Adrenal gland (tissue), 19 donors: ENCODE measurements at regions of chr15 and their contacts with region 1.

Region 1: DNA sequence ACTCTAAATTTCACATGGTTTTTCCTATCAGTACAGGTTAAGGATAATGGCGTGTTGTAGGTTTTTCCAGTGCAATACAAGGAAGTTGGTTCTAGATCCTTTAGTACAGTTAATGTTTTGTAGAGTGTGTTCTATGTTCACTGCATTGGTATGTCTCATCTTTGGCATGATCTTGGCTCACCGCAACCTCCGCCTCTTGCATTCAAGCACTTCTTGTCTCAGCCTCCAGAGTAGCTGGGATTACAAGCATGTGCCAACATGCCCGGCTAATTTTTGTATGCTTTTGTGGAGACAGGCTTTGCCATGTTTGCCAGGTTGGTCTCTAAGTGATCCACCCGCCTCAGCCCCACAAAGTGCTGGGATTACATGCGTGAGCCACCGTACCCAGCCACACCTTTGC is 30.4 kb downstream of the SNRPN start:
- DNase-seq: no peak
- H3K4me3 ChIP-seq: no peak overlapping the region
- H3K27ac ChIP-seq: no peak overlapping the region
- H3K4me1 ChIP-seq: no peaks in the 10 kb centered on the region
- H3K27me3 ChIP-seq: no peaks in the 10 kb centered on the region
- CTCF ChIP-seq: no peak
- POLR2A ChIP-seq: no peak

Region 2: DNA sequence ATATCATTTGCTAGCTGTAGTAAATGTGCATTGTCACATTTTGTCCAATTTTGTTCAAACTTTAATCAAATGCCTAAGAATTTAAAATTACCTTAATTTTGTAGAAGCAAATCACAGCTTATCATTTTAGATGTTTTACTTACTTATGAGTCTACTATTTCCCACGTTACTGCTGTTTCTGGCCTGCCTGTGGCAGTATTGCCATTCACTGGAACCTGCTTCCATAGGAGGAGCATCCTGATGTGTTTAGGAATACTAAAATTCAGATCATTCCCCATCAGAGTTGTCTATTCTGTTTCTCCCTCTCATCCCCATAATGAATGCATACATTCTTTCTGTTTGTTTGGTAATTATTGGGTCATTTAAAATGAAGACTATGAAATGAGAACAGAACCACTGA is 149.9 kb before region 1 on chr15:
- intact Hi-C with region 1: no loop called
- DNase-seq: no peak
- H3K4me3 ChIP-seq: no peak overlapping the region
- H3K27ac ChIP-seq: no peak overlapping the region
- H3K4me1 ChIP-seq: no peaks in the 10 kb centered on the region
- H3K27me3 ChIP-seq: no peaks in the 10 kb centered on the region
- CTCF ChIP-seq: no peak
- POLR2A ChIP-seq: no peak

Region 3: DNA sequence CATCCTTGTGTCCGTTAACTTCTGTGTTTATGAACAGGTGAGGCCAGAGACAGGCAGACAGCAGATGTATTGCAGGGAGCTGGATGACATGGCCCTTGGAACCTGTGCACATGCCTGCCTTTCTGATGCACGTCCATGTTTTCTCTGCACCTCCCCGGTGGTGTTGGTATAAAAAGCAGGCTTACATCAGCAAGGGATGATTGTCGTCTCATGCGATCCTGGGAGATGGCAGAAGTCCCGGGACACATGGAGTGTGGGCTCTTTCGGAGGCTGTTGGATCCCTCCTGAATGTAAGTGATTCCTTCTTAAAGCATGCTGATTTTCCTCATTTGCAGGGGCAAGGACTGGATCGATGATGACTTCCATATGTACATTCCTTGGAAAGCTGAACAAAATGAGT is 104.4 kb after region 1 on chr15:
- intact Hi-C with region 1: loop called in 1 of 2 experiments (anchors 5 kb)
- DNase-seq: peak in 1 of 7 donors; percentile 40
- H3K4me3 ChIP-seq: no peak overlapping the region
- H3K27ac ChIP-seq: no peak overlapping the region
- H3K4me1 ChIP-seq: no peaks in the 10 kb centered on the region
- H3K27me3 ChIP-seq: no peaks in the 10 kb centered on the region
- CTCF ChIP-seq: no peak
- POLR2A ChIP-seq: no peak